ENCODE measurements at regions of chrX and their contacts with region 1.

Region 1: DNA sequence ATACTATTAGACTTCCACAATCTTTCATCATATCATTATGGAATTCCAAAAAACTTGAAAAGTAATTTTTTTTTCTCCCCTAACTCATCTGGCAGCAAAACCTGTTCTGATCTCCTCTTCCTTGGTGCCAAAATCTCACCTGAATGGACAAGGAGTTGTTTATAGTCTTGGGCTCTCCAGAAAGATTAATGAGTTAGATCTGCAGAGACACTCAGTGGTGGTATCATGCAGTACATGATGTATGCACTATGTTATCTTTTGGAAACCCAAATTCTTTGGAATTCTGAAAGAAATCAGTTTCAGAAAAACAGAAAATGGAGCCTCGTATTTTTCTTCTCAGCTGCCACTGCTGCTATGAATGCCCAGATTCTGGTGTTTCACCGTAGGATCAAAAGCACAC is 11.7 kb downstream of the GPM6B start:
- DNase-seq: no peak
- H3K4me3 ChIP-seq: no peak overlapping the region
- H3K27ac ChIP-seq: no peak overlapping the region
- H3K4me1 ChIP-seq: no peaks in the 10 kb centered on the region
- H3K27me3 ChIP-seq: no peaks in the 10 kb centered on the region
- CTCF ChIP-seq: no peak
- EP300 ChIP-seq: no peak
- POLR2A ChIP-seq: no peak

Region 2: GRCh38 chrX:13721819-13722519 is 83.3 kb before region 1 on chrX:
- intact Hi-C with region 1: no loop called
- DNase-seq: no peak
- H3K4me3 ChIP-seq: no peak overlapping the region
- H3K27ac ChIP-seq: peak overlapping the region; percentile 47 to 82 (median 64)
- H3K4me1 ChIP-seq: peaks cover 0 to 24% (median 14%) of the 10 kb centered on the region in 4 donors
- H3K27me3 ChIP-seq: no peaks in the 10 kb centered on the region
- CTCF ChIP-seq: no peak
- EP300 ChIP-seq: no peak
- POLR2A ChIP-seq: no peak

Region 3: GRCh38 chrX:13786048-13786447 is 19.2 kb before region 1 on chrX:
- intact Hi-C with region 1: no loop called
- DNase-seq: no peak
- H3K4me3 ChIP-seq: no peak overlapping the region
- H3K27ac ChIP-seq: no peak overlapping the region
- H3K4me1 ChIP-seq: peaks cover 0 to 4% (median 2%) of the 10 kb centered on the region in 4 donors
- H3K27me3 ChIP-seq: no peaks in the 10 kb centered on the region
- CTCF ChIP-seq: no peak
- EP300 ChIP-seq: no peak
- POLR2A ChIP-seq: no peak

Region 4: DNA sequence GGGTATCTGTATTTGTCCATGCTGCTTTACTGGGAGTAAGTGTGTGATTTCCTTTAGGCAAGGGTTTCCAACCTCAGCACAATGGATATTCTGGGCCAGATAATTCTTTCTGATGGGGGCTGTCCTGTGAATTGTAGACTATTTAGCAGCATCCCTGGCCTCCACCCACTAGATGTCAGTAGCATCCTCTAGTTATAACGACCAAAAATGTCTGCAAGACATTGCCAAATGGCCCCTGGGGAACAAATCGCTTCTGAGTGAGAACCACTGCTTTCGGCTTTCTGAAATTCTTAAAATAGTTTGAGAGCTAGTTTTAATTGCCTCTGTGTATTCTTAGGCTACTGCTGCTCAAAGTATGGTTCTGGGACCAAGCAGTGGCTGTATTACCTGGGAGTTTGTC is 92.8 kb after region 1 on chrX:
- intact Hi-C with region 1: loop called (anchors 10 kb)
- DNase-seq: no peak
- H3K4me3 ChIP-seq: no peak overlapping the region
- H3K27ac ChIP-seq: peak overlapping the region in 1 of 4 donors; percentile 57
- H3K4me1 ChIP-seq: no peaks in the 10 kb centered on the region
- H3K27me3 ChIP-seq: no peaks in the 10 kb centered on the region
- CTCF ChIP-seq: no peak
- EP300 ChIP-seq: no peak
- POLR2A ChIP-seq: no peak

Measured in sigmoid colon (tissue), 7 donors.